ENCODE measurements at regions of chr1 and their contacts with region 1.

Region 1: GRCh38 chr1:150606463-150607148 is 22.8 kb downstream of the ENSA start:
- DNase-seq: no peak
- H3K4me3 Mint-ChIP-seq: no peak overlapping the region
- H3K27ac Mint-ChIP-seq: no peak overlapping the region
- H3K4me1 Mint-ChIP-seq: peaks cover 29% of the 10 kb centered on the region
- H3K27me3 Mint-ChIP-seq: no peaks in the 10 kb centered on the region
- CTCF ChIP-seq: no peak

Region 2: DNA sequence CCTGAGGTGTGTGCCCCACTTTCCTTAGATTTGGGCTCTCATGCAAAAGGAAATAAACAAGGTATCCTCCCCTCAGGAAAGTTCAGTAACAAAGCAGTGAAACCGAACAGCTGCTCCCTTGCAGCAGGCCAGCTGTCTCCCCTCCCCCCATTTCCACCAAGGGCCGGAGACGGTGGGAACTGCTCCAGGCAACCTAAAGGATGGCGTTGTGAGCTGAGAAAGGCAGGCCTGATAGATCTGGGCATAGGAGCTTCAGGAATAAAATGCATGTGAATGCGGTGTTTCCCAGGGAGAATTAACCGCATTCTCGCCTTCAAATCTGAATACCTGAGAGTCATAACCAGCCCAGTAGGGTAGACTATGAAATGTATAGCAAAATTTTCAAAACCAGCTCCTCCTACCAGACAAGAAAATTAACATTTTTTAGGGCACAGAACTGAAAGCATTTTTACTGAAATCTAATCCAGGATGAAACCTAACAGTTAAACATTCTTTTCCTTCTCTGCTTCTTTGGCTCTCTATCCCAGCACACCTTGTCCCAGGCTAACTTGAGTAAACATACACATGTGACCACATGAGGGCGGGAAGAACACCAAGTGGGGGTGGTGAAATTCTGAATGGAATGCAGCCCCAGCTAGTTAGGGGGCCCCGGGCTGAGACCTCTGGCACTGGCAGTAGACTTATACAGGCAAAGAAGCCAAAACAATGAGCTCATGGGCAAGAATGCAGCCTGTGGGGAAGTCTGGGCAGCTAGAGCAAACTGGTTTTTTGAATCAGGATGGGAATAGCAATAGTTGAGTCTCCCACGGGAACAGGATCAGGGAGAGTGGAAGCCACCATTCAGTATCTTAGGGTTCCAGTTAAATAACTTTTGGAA is 38.7 kb before region 1 on chr1:
- CTCF ChIA-PET with region 1: interaction called, 203 read pairs
- POLR2A ChIA-PET with region 1: interaction called, 1,125 read pairs
- intact Hi-C with region 1: no loop called
- DNase-seq: peak; percentile 100
- H3K4me3 Mint-ChIP-seq: peak overlapping the region; percentile 52
- H3K27ac Mint-ChIP-seq: peak overlapping the region; percentile 99
- H3K4me1 Mint-ChIP-seq: peaks cover 64% of the 10 kb centered on the region
- H3K27me3 Mint-ChIP-seq: no peaks in the 10 kb centered on the region
- CTCF ChIP-seq: peak; percentile 6

Region 3: GRCh38 chr1:150703427-150703826 is 96.8 kb after region 1 on chr1:
- CTCF ChIA-PET with region 1: no interaction called
- POLR2A ChIA-PET with region 1: no interaction called
- intact Hi-C with region 1: no loop called
- DNase-seq: no peak
- H3K4me3 Mint-ChIP-seq: no peak overlapping the region
- H3K27ac Mint-ChIP-seq: no peak overlapping the region
- H3K4me1 Mint-ChIP-seq: no peaks in the 10 kb centered on the region
- H3K27me3 Mint-ChIP-seq: no peaks in the 10 kb centered on the region
- CTCF ChIP-seq: no peak

Region 4: GRCh38 chr1:151539990-151540981 is 933.7 kb after region 1 on chr1 and contains the start of gene TUFT1:
- CTCF ChIA-PET with region 1: no interaction called
- POLR2A ChIA-PET with region 1: no interaction called
- intact Hi-C with region 1: no loop called
- DNase-seq: peak; percentile 97
- H3K4me3 Mint-ChIP-seq: peak within 1 kb of the TSS; percentile 96
- H3K27ac Mint-ChIP-seq: peak within 1 kb of the TSS; percentile 98
- H3K4me1 Mint-ChIP-seq: peaks cover 62% of the 10 kb centered on the region
- H3K27me3 Mint-ChIP-seq: no peaks in the 10 kb centered on the region
- CTCF ChIP-seq: no peak
- total RNA-seq, gene TUFT1: 90.6 and 162 TPM in 2 replicates

Measured in MCF 10A (cell line).